ENCODE measurements at regions of chr3 and their contacts with region 1.

Region 1: GRCh38 chr3:149480325-149481017 is 6.0 kb downstream of the TM4SF4 start:
- DNase-seq: peak; percentile 77
- H3K4me3 ChIP-seq: no peak overlapping the region
- H3K27ac ChIP-seq: peak overlapping the region in 1 of 2 experiments; percentile 23; a peak in 1 of 4 replicates
- H3K4me1 ChIP-seq: peaks cover 0 to 10% of the 10 kb centered on the region in 2 experiments; a peak in 1 of 4 replicates
- H3K27me3 ChIP-seq: no peaks in the 10 kb centered on the region
- CTCF ChIP-seq: peak; percentile 93
- EP300 ChIP-seq: no peak
- RAD21 ChIP-seq: peak; percentile 97

Region 2: GRCh38 chr3:149152420-149152819 is 328.1 kb before region 1 on chr3:
- CTCF ChIA-PET with region 1: no interaction called
- POLR2A ChIA-PET with region 1: no interaction called
- DNase-seq: no peak
- H3K4me3 ChIP-seq: no peak overlapping the region
- H3K27ac ChIP-seq: peak overlapping the region; percentile 28 to 85; a peak in 3 of 4 replicates
- H3K4me1 ChIP-seq: peaks cover 0 to 23% of the 10 kb centered on the region in 2 experiments; a peak in 2 of 4 replicates
- H3K27me3 ChIP-seq: no peaks in the 10 kb centered on the region
- CTCF ChIP-seq: no peak
- EP300 ChIP-seq: no peak
- RAD21 ChIP-seq: no peak

Region 3: GRCh38 chr3:149352556-149352955 is 127.9 kb before region 1 on chr3:
- CTCF ChIA-PET with region 1: interaction called, 23 read pairs
- POLR2A ChIA-PET with region 1: no interaction called
- DNase-seq: peak; percentile 62
- H3K4me3 ChIP-seq: no peak overlapping the region
- H3K27ac ChIP-seq: no peak overlapping the region
- H3K4me1 ChIP-seq: no peaks in the 10 kb centered on the region
- H3K27me3 ChIP-seq: no peaks in the 10 kb centered on the region
- CTCF ChIP-seq: peak; percentile 66
- EP300 ChIP-seq: no peak
- RAD21 ChIP-seq: peak; percentile 69

Region 4: GRCh38 chr3:149393345-149394160 is 86.9 kb before region 1 on chr3:
- CTCF ChIA-PET with region 1: interaction called, 13 read pairs
- POLR2A ChIA-PET with region 1: no interaction called
- DNase-seq: peak; percentile 68
- H3K4me3 ChIP-seq: no peak overlapping the region
- H3K27ac ChIP-seq: peak overlapping the region in 1 of 2 experiments; percentile 88; a peak in 2 of 4 replicates
- H3K4me1 ChIP-seq: peaks cover 18 to 31% of the 10 kb centered on the region in 2 experiments
- H3K27me3 ChIP-seq: no peaks in the 10 kb centered on the region
- CTCF ChIP-seq: peak; percentile 98
- EP300 ChIP-seq: no peak
- RAD21 ChIP-seq: peak; percentile 94

Region 5: GRCh38 chr3:149466192-149466591 is 14.3 kb before region 1 on chr3:
- CTCF ChIA-PET with region 1: interaction called, 24 read pairs
- POLR2A ChIA-PET with region 1: no interaction called
- DNase-seq: no peak
- H3K4me3 ChIP-seq: no peak overlapping the region
- H3K27ac ChIP-seq: peak overlapping the region; percentile 65 to 87; a peak in 3 of 4 replicates
- H3K4me1 ChIP-seq: peaks cover 0 to 29% of the 10 kb centered on the region in 2 experiments; a peak in 3 of 4 replicates
- H3K27me3 ChIP-seq: no peaks in the 10 kb centered on the region
- CTCF ChIP-seq: no peak
- EP300 ChIP-seq: peak in 1 of 2 experiments; percentile 74; a peak in 1 of 4 replicates
- RAD21 ChIP-seq: no peak

Region 6: GRCh38 chr3:150020527-150020926 is 540.1 kb after region 1 on chr3:
- CTCF ChIA-PET with region 1: no interaction called
- POLR2A ChIA-PET with region 1: no interaction called
- DNase-seq: no peak
- H3K4me3 ChIP-seq: no peak overlapping the region
- H3K27ac ChIP-seq: peak overlapping the region in 1 of 2 experiments; percentile 53; a peak in 1 of 4 replicates
- H3K4me1 ChIP-seq: peaks cover 0 to 10% of the 10 kb centered on the region in 2 experiments; a peak in 2 of 4 replicates
- H3K27me3 ChIP-seq: no peaks in the 10 kb centered on the region
- CTCF ChIP-seq: no peak
- EP300 ChIP-seq: peak in 1 of 2 experiments; percentile 61; a peak in 1 of 4 replicates
- RAD21 ChIP-seq: no peak

Measured in SK-N-SH (cell line).